H1 (cell line): ENCODE measurements at regions of chr10 and their contacts with region 1.

Region 1: DNA sequence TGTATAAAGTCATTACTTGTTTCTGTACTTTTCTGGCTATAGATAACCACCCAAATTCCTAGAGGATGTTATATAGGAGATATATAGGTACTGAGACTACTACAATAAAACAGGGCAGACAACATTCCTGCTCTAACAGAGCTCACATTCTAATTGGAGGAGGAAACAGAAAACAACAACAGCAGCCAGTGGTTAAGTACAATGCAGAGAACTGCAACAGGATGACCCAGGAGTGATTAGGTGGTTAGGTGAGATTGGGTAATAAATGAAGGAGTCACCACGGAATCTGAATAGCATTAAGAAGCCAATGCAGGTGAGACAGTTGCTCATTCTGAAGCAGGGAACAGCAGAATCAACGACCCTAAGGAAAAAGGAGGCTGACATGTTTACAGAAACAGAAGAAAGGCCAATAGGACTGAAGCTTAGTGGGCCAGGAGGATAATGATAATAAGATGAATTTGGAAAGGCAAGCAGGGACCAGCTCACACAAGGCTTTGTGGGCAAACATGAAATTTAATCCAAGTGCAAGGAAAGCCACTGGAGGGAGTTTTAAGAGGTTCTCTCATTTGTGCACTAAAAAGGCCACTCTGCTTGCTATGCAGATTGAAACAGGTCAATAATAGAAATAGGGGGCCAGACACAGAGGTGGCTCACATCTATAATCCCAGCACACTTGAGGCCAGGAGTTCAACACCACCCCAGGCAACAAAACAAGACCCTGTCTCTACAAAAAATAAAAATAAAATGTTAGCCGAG is 16.9 kb upstream of the REEP3 start:
- DNase-seq: no peak
- H3K4me3 ChIP-seq: peak overlapping the region in 1 of 4 experiments; percentile 15; a peak in 1 of 8 replicates
- H3K27ac ChIP-seq: peak overlapping the region; percentile 29; the same call in 1 of the 2 replicates
- H3K4me1 ChIP-seq: peaks cover 0 to 18% (median 12%) of the 10 kb centered on the region in 4 experiments; a peak in 6 of 7 replicates
- H3K27me3 ChIP-seq: no peaks in the 10 kb centered on the region
- CTCF ChIP-seq: no peak
- EP300 ChIP-seq: no peak
- POLR2A ChIP-seq: no peak
- RAD21 ChIP-seq: no peak

Region 2: GRCh38 chr10:63515002-63515763 is 10.9 kb after region 1 on chr10:
- CTCF ChIA-PET with region 1: interaction called, 10 read pairs
- POLR2A ChIA-PET with region 1: interaction called, 49 read pairs
- DNase-seq: peak in 1 of 2 experiments; percentile 59
- H3K4me3 ChIP-seq: peak overlapping the region in 1 of 4 experiments; percentile 43; a peak in 3 of 8 replicates
- H3K27ac ChIP-seq: peak overlapping the region; percentile 88
- H3K4me1 ChIP-seq: peaks cover 2 to 17% (median 14%) of the 10 kb centered on the region in 4 experiments; a peak in 6 of 7 replicates
- H3K27me3 ChIP-seq: no peaks in the 10 kb centered on the region
- CTCF ChIP-seq: no peak
- EP300 ChIP-seq: no peak
- POLR2A ChIP-seq: peak in 1 of 2 experiments; percentile 28; a peak in 1 of 3 replicates
- RAD21 ChIP-seq: 0 out of 4 replicates have a peak, but pooled peaks of 1 of the 2 experiments have one; percentile 13